PC-9 (cell line): ENCODE measurements at regions of chr7 and their contacts with region 1.

Region 1: GRCh38 chr7:11394438-11394837 is 420.8 kb downstream of the PHF14 start:
- DNase-seq: no peak
- H3K4me3 ChIP-seq: no peak overlapping the region
- H3K27ac ChIP-seq: no peak overlapping the region
- H3K4me1 ChIP-seq: no peaks in the 10 kb centered on the region
- H3K27me3 ChIP-seq: no peaks in the 10 kb centered on the region
- CTCF ChIP-seq: no peak

Region 2: DNA sequence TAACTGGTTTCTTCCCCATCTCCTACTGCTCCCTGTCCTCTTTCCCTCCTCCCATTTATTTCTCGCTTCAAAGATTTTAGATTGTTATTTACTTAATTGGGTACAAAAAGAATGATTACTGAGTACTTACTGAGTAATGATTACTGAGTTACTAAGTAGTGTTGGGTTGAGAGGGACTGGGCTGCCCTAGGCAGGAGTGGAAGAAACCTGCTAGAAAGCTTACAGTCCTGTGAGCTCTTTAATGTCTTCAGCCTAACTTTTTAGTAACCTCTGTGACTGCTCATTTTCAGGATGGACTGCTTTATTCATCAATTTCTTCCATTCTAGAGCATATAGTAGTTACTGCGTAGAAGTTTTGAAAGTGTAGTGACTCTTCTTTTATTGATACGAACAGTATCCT is 413.1 kb before region 1 on chr7:
- CTCF ChIA-PET with region 1: no interaction called
- POLR2A ChIA-PET with region 1: interaction called, 21 read pairs
- intact Hi-C with region 1: no loop called
- DNase-seq: no peak
- H3K4me3 ChIP-seq: no peak overlapping the region
- H3K27ac ChIP-seq: no peak overlapping the region
- H3K4me1 ChIP-seq: 0 out of 2 replicates have a peak, but pooled peaks cover 1% of the 10 kb centered on the region
- H3K27me3 ChIP-seq: no peaks in the 10 kb centered on the region
- CTCF ChIP-seq: no peak

Region 3: DNA sequence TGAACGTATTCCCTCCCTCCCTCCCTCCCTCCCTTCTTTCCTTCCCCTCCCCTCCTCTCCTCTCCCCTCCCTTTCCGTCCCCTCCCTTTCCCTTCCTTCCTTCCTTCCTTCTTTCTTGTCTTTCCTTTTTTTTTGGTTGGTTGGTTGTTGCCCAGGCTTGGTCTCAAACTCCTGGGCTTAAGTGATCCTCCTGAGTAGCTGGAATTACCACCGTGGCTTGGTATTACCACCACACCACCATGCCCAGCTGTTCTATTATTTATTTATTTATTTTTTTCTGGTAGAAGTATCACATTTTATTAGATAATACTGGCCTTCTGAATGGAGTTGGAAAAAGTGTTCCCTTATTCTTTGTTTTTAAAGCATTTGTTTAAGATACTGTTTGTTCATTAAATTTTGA is 324.8 kb before region 1 on chr7:
- CTCF ChIA-PET with region 1: no interaction called
- POLR2A ChIA-PET with region 1: no interaction called
- intact Hi-C with region 1: no loop called
- DNase-seq: no peak
- H3K4me3 ChIP-seq: no peak overlapping the region
- H3K27ac ChIP-seq: no peak overlapping the region
- H3K4me1 ChIP-seq: no peaks in the 10 kb centered on the region
- H3K27me3 ChIP-seq: no peaks in the 10 kb centered on the region
- CTCF ChIP-seq: no peak

Region 4: DNA sequence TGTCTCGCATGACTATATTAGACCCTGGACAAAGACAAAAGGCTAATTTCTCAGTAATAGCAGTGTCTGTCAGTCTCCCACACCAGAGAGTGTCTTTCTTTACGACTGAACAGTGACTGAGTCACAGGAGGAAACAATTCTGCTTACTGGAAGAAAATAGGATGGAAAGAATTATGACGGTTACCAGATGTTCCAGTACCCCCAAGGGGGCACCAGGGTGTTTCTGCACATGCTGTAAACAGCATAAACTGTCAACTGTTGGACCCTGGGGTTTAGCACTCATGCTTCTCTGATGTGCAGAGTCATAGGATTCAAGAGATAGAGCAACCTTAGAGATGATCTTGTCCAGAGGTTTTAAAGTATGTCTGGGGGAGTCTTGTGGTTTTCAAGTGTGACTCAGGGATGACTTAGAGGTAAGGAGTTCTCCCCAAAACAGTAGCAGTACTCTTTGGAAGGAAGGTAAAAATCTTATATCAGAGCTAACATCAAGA is 145.9 kb after region 1 on chr7:
- CTCF ChIA-PET with region 1: no interaction called
- POLR2A ChIA-PET with region 1: no interaction called
- intact Hi-C with region 1: no loop called
- DNase-seq: peak in 1 of 2 experiments; percentile 17
- H3K4me3 ChIP-seq: no peak overlapping the region
- H3K27ac ChIP-seq: no peak overlapping the region
- H3K4me1 ChIP-seq: no peaks in the 10 kb centered on the region
- H3K27me3 ChIP-seq: no peaks in the 10 kb centered on the region
- CTCF ChIP-seq: no peak

Region 5: DNA sequence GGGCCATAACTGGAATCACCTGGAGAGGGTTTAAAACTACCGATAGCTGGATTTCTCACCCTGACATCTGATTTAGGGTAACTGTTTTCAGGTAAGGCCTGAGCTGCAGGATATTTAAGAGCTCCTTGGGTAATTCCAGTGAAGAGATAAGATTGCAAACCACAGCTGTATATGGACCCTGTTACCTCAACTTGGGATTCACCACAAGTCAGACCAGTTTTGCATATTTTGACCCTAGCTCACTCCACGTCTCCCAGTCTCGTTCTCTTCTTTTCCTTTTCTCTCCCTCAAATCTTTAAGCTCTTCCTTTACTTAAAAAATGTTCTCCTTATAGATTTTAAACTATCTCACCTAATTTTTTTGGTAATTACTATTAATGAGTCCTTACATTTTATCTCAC is 173.1 kb after region 1 on chr7:
- CTCF ChIA-PET with region 1: no interaction called
- POLR2A ChIA-PET with region 1: no interaction called
- intact Hi-C with region 1: no loop called
- DNase-seq: no peak
- H3K4me3 ChIP-seq: no peak overlapping the region
- H3K27ac ChIP-seq: no peak overlapping the region
- H3K4me1 ChIP-seq: no peaks in the 10 kb centered on the region
- H3K27me3 ChIP-seq: no peaks in the 10 kb centered on the region
- CTCF ChIP-seq: no peak